Activated B cell treated with CpG ODN at 0.5 μM for 24 hours (primary cell): ENCODE measurements at regions of chr6 and their contacts with region 1.

Region 1: DNA sequence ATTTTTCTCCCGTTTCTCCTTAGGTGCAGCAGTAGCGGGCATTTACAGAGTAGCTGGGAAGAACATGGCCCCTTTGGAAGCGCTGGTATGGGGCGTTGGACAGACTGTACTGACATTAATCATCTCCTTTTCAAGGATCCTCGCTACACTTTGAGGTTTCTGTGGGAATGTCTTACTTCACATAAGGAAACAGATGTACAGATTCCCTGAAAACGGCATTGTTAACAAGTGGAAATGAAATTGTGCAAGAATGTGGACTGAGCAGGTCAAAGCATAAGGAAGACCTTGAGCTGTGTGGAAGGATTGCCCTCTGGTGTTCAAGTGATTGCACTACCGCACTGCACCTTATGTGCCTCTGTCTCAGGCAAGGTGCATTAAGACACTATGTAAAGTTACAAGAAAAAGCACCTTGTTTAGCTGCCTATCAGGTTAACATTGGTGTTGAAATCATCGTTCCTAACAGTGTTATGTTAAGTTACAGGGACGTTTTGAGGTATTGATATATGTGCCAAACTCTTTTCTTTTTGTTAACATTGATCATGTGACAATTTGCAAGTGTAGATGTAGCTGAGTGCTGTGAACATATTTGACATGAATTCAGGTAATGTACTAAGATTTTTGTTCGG is 38.0 kb downstream of the TMEM170B start:
- DNase-seq: no peak
- ATAC-seq: peak; percentile 100
- H3K4me3 Mint-ChIP-seq: no peak overlapping the region
- H3K27ac Mint-ChIP-seq: no peak overlapping the region
- H3K4me1 Mint-ChIP-seq: peaks cover 2% of the 10 kb centered on the region
- H3K27me3 Mint-ChIP-seq: no peaks in the 10 kb centered on the region
- CTCF ChIP-seq: peak; percentile 73

Region 2: DNA sequence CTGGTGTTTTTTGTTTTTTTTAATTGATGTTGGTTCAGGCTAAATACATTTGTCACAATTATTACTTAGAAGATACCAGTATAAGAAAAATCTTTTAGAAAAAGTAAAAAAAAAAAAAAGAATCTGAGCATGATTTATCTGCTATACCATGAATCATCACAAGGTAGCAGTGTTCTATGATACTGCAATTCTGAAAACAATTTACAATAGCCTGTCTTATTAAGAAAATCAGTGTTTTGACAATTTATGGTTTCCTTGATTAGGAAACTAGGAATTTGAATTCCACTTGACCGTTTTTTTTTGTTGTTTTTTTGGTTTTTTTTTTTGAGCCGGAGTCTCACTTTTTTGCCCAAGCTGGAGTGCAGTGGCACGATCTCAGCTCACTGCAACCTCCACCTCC is 727.8 kb before region 1 on chr6:
- CTCF ChIA-PET with region 1: no interaction called
- POLR2A ChIA-PET with region 1: no interaction called
- intact Hi-C with region 1: loop called (anchors 1 kb)
- DNase-seq: no peak
- ATAC-seq: no peak
- H3K4me3 Mint-ChIP-seq: no peak overlapping the region
- H3K27ac Mint-ChIP-seq: no peak overlapping the region
- H3K4me1 Mint-ChIP-seq: no peaks in the 10 kb centered on the region
- H3K27me3 Mint-ChIP-seq: peaks cover 6% of the 10 kb centered on the region
- CTCF ChIP-seq: no peak

Region 3: GRCh38 chr6:10954590-10955010 is 620.9 kb before region 1 on chr6:
- CTCF ChIA-PET with region 1: interaction called, 15 read pairs
- POLR2A ChIA-PET with region 1: no interaction called
- intact Hi-C with region 1: loop called (anchors 1 kb)
- DNase-seq: peak; percentile 59
- ATAC-seq: peak; percentile 50
- H3K4me3 Mint-ChIP-seq: no peak overlapping the region
- H3K27ac Mint-ChIP-seq: no peak overlapping the region
- H3K4me1 Mint-ChIP-seq: peaks cover 3% of the 10 kb centered on the region
- H3K27me3 Mint-ChIP-seq: peaks cover 16% of the 10 kb centered on the region
- CTCF ChIP-seq: no peak

Region 4: DNA sequence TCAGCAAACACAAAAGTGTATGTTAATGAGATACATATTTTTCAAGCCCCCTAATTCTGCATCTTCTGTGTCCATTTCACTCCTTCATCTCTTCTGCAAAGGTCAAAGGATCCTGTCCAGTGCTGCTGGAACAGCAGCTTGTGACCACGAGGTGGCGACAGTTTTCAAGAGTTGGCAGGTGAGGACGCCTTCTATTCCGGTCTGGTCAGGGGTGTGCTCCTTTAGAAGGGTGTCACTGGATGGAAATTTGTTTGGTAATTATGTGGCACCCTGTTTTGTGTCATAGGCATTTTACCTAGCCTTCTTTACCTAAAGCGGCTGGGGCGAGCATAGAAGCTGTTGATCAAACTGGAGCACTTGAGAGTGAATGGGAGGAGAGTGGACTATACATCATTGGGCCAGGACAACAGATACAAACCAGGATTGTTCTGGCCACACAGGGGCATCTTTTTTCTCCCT is 431.1 kb before region 1 on chr6:
- CTCF ChIA-PET with region 1: interaction called, 27 read pairs
- POLR2A ChIA-PET with region 1: interaction called, 6 read pairs
- intact Hi-C with region 1: loop called (anchors 1 kb)
- DNase-seq: peak; percentile 52
- ATAC-seq: peak; percentile 89
- H3K4me3 Mint-ChIP-seq: no peak overlapping the region
- H3K27ac Mint-ChIP-seq: no peak overlapping the region
- H3K4me1 Mint-ChIP-seq: peaks cover 13% of the 10 kb centered on the region
- H3K27me3 Mint-ChIP-seq: no peaks in the 10 kb centered on the region
- CTCF ChIP-seq: peak; percentile 85

Region 5: DNA sequence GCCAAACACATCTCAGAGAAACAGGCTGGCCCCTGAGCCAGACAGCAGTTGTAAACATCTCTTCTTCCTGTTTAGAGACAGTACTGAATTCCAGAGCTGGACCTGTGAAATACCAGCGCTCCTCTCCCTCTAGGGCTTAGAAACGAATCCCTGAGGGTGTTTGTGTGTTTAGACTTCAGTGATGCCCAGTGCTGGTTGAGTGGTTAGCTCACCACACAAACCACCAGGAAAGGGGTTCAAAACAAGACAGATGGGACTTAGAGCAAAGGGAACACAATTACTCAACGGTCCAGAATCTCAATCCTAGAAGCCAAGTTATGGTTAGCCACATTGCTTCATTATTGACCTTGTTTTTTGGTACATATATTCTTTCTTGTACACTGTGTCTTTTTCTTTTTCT is 146.6 kb before region 1 on chr6:
- CTCF ChIA-PET with region 1: no interaction called
- POLR2A ChIA-PET with region 1: no interaction called
- intact Hi-C with region 1: no loop called
- DNase-seq: no peak
- ATAC-seq: no peak
- H3K4me3 Mint-ChIP-seq: peak overlapping the region; percentile 33
- H3K27ac Mint-ChIP-seq: peak overlapping the region; percentile 47
- H3K4me1 Mint-ChIP-seq: peaks cover 43% of the 10 kb centered on the region
- H3K27me3 Mint-ChIP-seq: no peaks in the 10 kb centered on the region
- CTCF ChIP-seq: no peak

Region 6: DNA sequence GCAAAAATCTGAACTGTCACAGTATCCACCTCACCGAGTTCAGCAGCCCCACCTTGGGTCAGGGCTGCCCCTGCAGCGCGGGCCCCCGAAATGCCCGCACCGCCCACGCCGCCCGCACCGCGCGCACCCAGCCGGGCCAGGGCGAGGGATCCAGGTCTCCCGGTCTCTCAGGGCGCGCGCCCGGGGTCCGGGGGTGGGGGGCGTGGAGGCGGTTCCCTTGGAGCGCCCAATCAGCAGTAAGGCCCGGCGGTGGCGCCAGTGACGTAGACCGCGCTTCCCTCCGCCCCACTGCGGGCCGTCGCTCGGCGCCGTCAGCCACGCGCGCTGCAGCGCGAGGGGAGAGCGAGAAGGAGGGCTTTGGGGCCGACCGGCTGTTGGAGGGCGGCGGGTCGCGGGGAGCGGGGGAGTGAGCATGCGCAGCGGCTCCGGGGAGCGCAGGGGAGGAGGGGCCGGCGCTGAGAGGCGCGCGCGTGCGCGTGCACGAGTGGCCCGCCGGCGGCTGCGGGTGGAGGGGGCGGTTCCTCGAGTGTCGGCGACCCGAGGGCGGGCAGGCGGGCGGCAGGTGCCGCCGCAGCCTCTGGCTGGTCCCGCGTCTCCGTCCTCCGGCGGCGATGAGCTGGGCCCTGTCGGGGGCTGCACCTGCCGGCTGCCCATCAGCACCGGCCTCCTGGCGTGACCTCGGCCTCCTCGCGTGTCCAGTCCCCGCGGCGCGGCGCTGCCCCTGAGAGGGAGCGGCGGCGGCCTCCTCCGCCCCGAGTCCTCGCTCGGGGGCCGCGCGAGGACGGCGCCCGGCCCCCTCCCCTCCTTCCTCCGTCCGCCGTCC is 38.1 kb before region 1 on chr6 and contains the start of gene TMEM170B:
- CTCF ChIA-PET with region 1: interaction called, 6 read pairs
- POLR2A ChIA-PET with region 1: no interaction called
- intact Hi-C with region 1: loop called (anchors 2 kb)
- DNase-seq: peak; percentile 99
- ATAC-seq: peak; percentile 94
- H3K4me3 Mint-ChIP-seq: peak within 1 kb of the TSS; percentile 84
- H3K27ac Mint-ChIP-seq: peak within 1 kb of the TSS; percentile 74
- H3K4me1 Mint-ChIP-seq: peaks cover 11% of the 10 kb centered on the region
- H3K27me3 Mint-ChIP-seq: no peaks in the 10 kb centered on the region
- CTCF ChIP-seq: no peak
- total RNA-seq, gene TMEM170B: 2.6 and 2.8 TPM in 2 replicates

Region 7: DNA sequence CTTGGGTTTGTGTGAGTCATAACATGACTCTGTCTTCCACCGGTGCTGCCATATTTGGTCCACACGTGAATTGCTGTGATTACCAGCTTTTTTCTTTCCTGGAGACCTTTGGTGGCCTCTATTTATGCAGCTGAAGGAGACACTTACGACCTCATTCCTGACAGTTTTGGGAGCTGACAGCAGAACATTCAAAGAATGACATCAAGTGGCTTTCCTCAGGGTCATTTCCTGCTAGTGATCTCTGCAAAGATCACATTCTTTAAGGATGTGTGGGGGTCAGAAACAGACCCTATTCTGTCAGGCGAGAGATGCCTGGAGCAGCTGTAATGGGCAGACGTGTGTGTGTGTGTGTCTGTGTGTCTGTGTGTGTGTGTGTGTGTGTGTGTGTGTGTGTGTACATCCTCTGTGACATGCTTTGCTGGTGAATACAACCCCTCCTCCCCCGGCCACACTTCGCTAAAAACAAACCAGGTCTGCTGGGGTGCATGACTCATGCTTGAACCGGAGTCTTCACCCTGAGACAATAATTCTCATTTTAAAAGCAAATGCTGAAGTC is 77.6 kb after region 1 on chr6:
- CTCF ChIA-PET with region 1: no interaction called
- POLR2A ChIA-PET with region 1: no interaction called
- intact Hi-C with region 1: no loop called
- DNase-seq: no peak
- ATAC-seq: peak; percentile 31
- H3K4me3 Mint-ChIP-seq: no peak overlapping the region
- H3K27ac Mint-ChIP-seq: no peak overlapping the region
- H3K4me1 Mint-ChIP-seq: no peaks in the 10 kb centered on the region
- H3K27me3 Mint-ChIP-seq: peaks cover 9% of the 10 kb centered on the region
- CTCF ChIP-seq: no peak

Region 8: GRCh38 chr6:12174878-12175277 is 599.4 kb after region 1 on chr6:
- CTCF ChIA-PET with region 1: no interaction called
- POLR2A ChIA-PET with region 1: no interaction called
- intact Hi-C with region 1: no loop called
- DNase-seq: no peak
- ATAC-seq: no peak
- H3K4me3 Mint-ChIP-seq: no peak overlapping the region
- H3K27ac Mint-ChIP-seq: no peak overlapping the region
- H3K4me1 Mint-ChIP-seq: no peaks in the 10 kb centered on the region
- H3K27me3 Mint-ChIP-seq: no peaks in the 10 kb centered on the region
- CTCF ChIP-seq: no peak